Activated CD4-positive, alpha-beta T cell treated with anti-CD3 and anti-CD28 coated beads for 36 hours (primary cell): ENCODE measurements at regions of chr7 and their contacts with region 1.

Region 1: GRCh38 chr7:98106647-98107445 is at the start of gene LMTK2:
- DNase-seq: peak; percentile 98
- ATAC-seq: peak; percentile 100
- H3K4me3 Mint-ChIP-seq: peak within 1 kb of the TSS; percentile 95
- H3K27ac Mint-ChIP-seq: peak within 1 kb of the TSS; percentile 90
- H3K4me1 Mint-ChIP-seq: peaks cover 31% of the 10 kb centered on the region
- H3K27me3 Mint-ChIP-seq: peaks cover 6% of the 10 kb centered on the region
- total RNA-seq, gene LMTK2: 10.0 to 16.9 TPM

Region 2: GRCh38 chr7:97872025-97872669 is 234.7 kb before region 1 on chr7 and contains the start of gene ASNS:
- CTCF ChIA-PET with region 1: no interaction called
- POLR2A ChIA-PET with region 1: no interaction called
- intact Hi-C with region 1: loop called in 1 of 2 experiments (anchors 5 kb)
- DNase-seq: peak; percentile 96
- ATAC-seq: peak; percentile 96
- H3K4me3 Mint-ChIP-seq: peak within 1 kb of the TSS; percentile 92
- H3K27ac Mint-ChIP-seq: peak within 1 kb of the TSS; percentile 82
- H3K4me1 Mint-ChIP-seq: peaks cover 20% of the 10 kb centered on the region
- H3K27me3 Mint-ChIP-seq: no peaks in the 10 kb centered on the region
- total RNA-seq, gene ASNS: 228 to 247 TPM

Region 3: GRCh38 chr7:98021588-98022351 is 85.1 kb before region 1 on chr7:
- CTCF ChIA-PET with region 1: interaction called, 4 read pairs
- POLR2A ChIA-PET with region 1: no interaction called
- intact Hi-C with region 1: loop called in 1 of 2 experiments (anchors 1 kb)
- DNase-seq: peak; percentile 91
- ATAC-seq: peak; percentile 96
- H3K4me3 Mint-ChIP-seq: no peak overlapping the region
- H3K27ac Mint-ChIP-seq: no peak overlapping the region
- H3K4me1 Mint-ChIP-seq: peaks cover 4% of the 10 kb centered on the region
- H3K27me3 Mint-ChIP-seq: peaks cover 6% of the 10 kb centered on the region

Region 4: GRCh38 chr7:98168181-98168905 is 61.5 kb after region 1 on chr7:
- CTCF ChIA-PET with region 1: interaction called, 16 read pairs
- POLR2A ChIA-PET with region 1: no interaction called
- intact Hi-C with region 1: loop called (anchors 1 kb)
- DNase-seq: peak; percentile 68
- ATAC-seq: peak; percentile 68
- H3K4me3 Mint-ChIP-seq: no peak overlapping the region
- H3K27ac Mint-ChIP-seq: no peak overlapping the region
- H3K4me1 Mint-ChIP-seq: peaks cover 5% of the 10 kb centered on the region
- H3K27me3 Mint-ChIP-seq: no peaks in the 10 kb centered on the region

Region 5: DNA sequence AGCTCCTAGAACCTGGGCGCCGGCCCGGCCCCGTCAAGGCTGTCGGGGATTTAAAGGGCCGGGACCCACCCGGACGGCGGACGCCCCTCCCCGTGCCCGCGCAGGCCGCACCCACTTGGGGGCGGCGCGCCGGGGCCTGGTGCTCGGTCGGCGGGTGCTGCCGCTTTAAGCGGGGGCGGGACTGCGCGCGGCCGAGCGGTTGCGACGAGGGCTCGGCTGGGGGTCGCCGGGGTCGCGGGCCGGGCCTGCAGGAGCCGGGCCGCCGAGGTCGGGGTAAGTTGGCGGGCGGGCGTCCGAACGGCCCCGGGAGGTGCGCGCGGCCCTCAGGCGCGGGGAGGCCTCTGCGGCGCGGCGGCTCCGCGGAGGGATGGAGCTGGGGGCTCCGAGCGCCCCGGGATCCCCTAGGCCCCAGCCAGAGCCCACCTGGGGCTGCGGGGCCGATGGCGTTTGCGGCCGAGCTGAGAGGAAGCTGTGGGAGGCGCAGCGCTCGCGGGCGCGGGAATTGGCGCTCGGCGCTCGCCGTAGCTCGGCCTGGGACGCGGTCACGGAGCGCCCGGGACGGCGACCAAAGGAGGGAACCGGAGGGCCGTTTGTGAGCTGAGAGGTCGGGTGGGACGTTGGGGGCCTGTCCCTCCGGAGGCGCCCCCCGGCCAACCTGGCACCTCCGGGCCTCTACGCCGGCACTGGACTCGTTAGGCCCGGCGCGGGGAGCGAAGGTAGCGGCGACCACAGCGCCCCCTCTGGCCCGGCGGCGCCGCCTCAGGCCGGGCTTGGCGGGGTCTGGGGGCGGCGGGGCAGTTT is 771.7 kb after region 1 on chr7 and contains the start of gene TRRAP:
- CTCF ChIA-PET with region 1: no interaction called
- POLR2A ChIA-PET with region 1: no interaction called
- intact Hi-C with region 1: loop called in 1 of 2 experiments (anchors 2 kb)
- DNase-seq: peak; percentile 88
- ATAC-seq: peak; percentile 67
- H3K4me3 Mint-ChIP-seq: peak within 1 kb of the TSS; percentile 91
- H3K27ac Mint-ChIP-seq: peak within 1 kb of the TSS; percentile 96
- H3K4me1 Mint-ChIP-seq: peaks cover 30% of the 10 kb centered on the region
- H3K27me3 Mint-ChIP-seq: no peaks in the 10 kb centered on the region
- total RNA-seq, gene TRRAP: 51.7 to 54.0 TPM